Caco-2 (cell line): ENCODE measurements at regions of chr20 and their contacts with region 1.

Region 1: DNA sequence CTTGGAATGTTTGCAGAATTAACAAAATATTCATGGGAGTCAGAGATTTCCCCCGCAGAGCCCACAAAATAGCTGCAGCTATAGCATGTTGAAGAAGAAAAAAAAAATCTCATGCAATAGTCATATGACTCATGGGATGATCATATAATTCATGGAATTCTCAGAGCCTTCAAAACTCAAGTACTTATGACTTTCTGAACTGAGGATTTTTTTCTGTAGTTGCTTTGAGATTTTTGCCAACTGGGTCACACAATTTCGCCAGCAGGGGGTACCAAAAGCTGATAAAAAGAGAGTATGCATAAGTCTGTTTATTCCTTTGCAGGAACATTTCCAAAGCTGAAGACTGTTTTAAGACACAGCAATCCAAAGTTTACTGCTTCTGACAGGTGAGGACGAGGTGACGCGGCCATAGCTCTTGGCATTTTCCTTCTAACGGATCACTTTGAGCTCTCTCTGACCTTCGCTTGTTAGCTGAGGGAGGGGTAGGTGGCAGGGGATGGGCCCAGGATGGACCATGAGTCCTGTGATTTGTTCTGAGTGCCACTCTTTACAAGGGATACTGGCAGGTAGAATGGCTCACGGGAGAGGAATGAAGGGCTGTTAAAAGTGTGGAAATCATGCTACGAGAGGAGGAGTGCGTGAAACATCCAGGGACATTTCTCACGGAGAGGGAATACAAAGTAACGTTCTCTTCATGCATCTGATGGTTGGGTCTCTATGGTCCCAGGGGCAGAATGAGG is 586.2 kb upstream of the CHD6 start:
- DNase-seq: peak in 1 of 2 experiments; percentile 24
- H3K4me3 ChIP-seq: no peak overlapping the region
- H3K4me3 Mint-ChIP-seq: no peak overlapping the region
- H3K27ac Mint-ChIP-seq: no peak overlapping the region
- H3K4me1 ChIP-seq: no peaks in the 10 kb centered on the region
- H3K4me1 Mint-ChIP-seq: no peaks in the 10 kb centered on the region
- H3K27me3 ChIP-seq: no peaks in the 10 kb centered on the region
- H3K27me3 Mint-ChIP-seq: peaks cover 6% of the 10 kb centered on the region
- CTCF ChIP-seq: peak; percentile 51 to 52

Region 2: GRCh38 chr20:42401613-42402012 is 197.2 kb after region 1 on chr20:
- CTCF ChIA-PET with region 1: no interaction called
- POLR2A ChIA-PET with region 1: no interaction called
- intact Hi-C with region 1: no loop called
- DNase-seq: no peak
- H3K4me3 ChIP-seq: no peak overlapping the region
- H3K4me3 Mint-ChIP-seq: no peak overlapping the region
- H3K27ac Mint-ChIP-seq: no peak overlapping the region
- H3K4me1 ChIP-seq: no peaks in the 10 kb centered on the region
- H3K4me1 Mint-ChIP-seq: no peaks in the 10 kb centered on the region
- H3K27me3 ChIP-seq: no peaks in the 10 kb centered on the region
- H3K27me3 Mint-ChIP-seq: peaks cover 12% of the 10 kb centered on the region
- CTCF ChIP-seq: no peak

Region 3: GRCh38 chr20:42530822-42531448 is 326.6 kb after region 1 on chr20:
- CTCF ChIA-PET with region 1: no interaction called
- POLR2A ChIA-PET with region 1: no interaction called
- intact Hi-C with region 1: loop called (anchors 2 kb)
- DNase-seq: peak in 1 of 2 experiments; percentile 53
- H3K4me3 ChIP-seq: no peak overlapping the region
- H3K4me3 Mint-ChIP-seq: no peak overlapping the region
- H3K27ac Mint-ChIP-seq: no peak overlapping the region
- H3K4me1 ChIP-seq: no peaks in the 10 kb centered on the region
- H3K4me1 Mint-ChIP-seq: no peaks in the 10 kb centered on the region
- H3K27me3 ChIP-seq: no peaks in the 10 kb centered on the region
- H3K27me3 Mint-ChIP-seq: peaks cover 22% of the 10 kb centered on the region
- CTCF ChIP-seq: peak; percentile 82 to 92

Region 4: DNA sequence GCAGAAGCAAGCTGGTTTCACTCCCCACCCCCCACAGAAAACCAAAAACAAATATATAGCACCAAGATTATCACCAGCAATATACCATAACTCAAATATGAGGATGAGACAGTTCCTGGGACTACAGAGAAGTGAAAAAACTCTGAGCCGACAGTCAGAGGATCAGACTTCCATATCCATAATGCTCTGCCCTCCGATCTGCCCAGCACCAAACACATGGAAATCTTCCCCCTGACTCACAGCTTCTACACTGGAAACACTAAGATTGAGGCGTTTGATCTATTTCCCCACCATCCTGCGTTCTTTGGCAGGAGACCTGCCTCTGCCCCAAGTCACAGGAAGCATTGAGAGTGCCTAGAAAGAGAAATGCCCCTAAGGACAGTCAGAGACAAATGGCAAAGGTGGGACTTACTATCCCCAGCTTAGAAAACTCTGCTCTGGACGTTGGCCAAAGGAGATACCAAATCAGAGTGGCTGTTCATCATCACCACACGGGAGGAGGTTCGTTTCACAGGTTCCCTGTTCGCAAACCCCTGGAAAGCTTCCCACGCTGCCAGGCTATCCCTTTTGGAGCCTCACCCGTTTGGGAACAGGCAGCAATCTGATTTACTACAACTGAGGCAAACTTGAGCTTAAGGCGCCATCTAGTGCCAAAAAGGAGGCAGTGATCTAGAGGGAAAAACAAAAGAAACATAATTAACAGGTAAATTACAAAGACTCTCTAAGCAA is 1204.6 kb after region 1 on chr20:
- CTCF ChIA-PET with region 1: no interaction called
- POLR2A ChIA-PET with region 1: no interaction called
- intact Hi-C with region 1: loop called (anchors 10 kb)
- DNase-seq: peak; percentile 56 to 64
- H3K4me3 ChIP-seq: no peak overlapping the region
- H3K4me3 Mint-ChIP-seq: no peak overlapping the region
- H3K27ac Mint-ChIP-seq: no peak overlapping the region
- H3K4me1 ChIP-seq: no peaks in the 10 kb centered on the region
- H3K4me1 Mint-ChIP-seq: no peaks in the 10 kb centered on the region
- H3K27me3 ChIP-seq: no peaks in the 10 kb centered on the region
- H3K27me3 Mint-ChIP-seq: peaks cover 15% of the 10 kb centered on the region
- CTCF ChIP-seq: peak; percentile 87 to 91